ENCODE measurements at regions of chr6 and their contacts with region 1.

Region 1: DNA sequence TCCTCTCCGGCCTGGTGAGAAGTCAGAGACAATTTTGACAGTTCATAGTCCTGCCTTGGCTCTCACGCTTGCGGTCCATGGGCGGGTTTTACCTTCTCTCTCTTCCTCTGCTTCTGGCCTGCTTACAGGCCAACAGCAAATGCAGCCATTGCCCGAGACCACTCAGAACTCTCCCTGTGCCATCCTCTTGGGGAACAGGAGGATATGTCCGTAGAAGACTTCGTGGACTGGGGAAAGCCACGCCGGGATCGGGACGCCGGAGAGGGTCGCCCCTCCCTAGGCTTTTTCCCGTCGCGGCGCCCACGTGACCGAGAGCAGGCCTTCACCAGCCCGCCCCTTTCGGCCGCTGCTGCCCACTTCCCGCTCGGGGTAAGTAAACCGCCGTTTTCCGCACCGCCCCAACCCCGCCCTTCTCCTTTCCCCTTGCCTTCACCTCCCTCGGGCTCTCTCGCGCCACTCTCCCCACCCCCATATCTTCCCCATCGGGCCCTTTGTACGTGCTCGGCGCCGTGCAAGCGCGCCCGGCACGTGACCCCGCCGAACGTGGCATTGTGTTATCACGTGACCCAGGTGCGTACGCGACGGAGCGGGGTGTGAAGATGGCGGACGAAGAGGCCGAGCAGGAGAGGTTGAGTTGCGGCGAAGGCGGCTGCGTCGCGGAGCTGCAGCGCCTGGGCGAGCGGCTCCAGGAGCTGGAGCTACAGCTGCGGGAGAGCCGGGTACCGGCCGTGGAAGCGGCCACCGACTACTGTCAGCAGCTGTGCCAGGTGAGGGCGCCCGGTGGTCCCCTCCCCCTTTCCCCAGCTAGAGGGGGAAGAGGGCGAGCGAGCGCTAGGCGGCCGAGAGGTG is at the start of gene ZNF292:
- DNase-seq: peak; percentile 89 to 99 (median 92)

Region 2: DNA sequence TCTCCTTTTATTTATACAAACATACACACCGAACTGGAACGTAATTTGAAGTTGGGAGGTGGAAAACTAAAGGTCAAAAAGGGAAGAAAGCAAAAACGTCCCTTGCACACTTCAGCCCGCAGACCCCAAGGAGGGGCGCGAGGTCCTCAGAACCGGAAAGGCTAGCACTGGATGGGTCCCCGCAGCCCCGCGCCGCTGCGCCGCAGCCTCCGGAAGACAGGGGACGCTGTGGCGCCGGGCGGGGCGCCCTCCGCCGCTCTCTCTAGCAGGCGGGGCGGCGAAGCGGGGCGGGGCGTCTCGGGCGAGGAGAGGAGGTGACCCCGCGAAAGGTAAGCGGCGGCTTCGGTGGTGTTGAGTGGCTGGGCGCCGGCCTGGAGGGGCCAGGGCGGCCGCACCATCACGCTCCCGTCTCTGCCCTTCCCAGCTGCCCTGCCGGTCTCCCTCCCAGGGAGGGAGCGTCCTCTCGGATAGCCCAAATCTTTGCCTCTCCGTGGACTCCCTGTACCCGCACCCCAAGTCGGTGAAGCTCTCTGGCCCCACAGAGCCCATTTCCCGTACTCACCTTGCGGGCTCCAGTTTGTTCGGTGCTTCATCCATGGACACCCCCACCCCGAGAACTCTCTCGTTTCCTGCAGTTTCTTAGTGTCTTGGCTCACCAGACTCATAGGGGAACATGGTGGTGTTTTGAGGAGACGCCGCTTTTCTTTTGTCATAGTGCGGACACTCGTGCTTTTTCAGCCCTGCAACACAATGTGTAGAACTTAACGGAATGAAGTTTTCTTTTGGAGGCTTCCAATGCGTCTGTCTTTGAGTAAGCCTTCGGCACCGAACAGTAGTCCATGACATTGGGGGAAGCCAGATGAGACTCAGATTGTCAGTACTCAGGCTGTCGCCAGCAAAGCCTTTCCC is 167.3 kb after region 1 on chr6 and contains the start of gene SMIM8:
- intact Hi-C with region 1: loop called (anchors 10 kb)
- DNase-seq: peak; percentile 67 to 98 (median 79)

Region 3: GRCh38 chr6:87407901-87408720 is 252.9 kb after region 1 on chr6 and contains the start of gene CFAP206:
- intact Hi-C with region 1: loop called (anchors 10 kb)
- DNase-seq: peak; percentile 54 to 96 (median 73)